ENCODE measurements at regions of chr7 and their contacts with region 1.

Region 1: DNA sequence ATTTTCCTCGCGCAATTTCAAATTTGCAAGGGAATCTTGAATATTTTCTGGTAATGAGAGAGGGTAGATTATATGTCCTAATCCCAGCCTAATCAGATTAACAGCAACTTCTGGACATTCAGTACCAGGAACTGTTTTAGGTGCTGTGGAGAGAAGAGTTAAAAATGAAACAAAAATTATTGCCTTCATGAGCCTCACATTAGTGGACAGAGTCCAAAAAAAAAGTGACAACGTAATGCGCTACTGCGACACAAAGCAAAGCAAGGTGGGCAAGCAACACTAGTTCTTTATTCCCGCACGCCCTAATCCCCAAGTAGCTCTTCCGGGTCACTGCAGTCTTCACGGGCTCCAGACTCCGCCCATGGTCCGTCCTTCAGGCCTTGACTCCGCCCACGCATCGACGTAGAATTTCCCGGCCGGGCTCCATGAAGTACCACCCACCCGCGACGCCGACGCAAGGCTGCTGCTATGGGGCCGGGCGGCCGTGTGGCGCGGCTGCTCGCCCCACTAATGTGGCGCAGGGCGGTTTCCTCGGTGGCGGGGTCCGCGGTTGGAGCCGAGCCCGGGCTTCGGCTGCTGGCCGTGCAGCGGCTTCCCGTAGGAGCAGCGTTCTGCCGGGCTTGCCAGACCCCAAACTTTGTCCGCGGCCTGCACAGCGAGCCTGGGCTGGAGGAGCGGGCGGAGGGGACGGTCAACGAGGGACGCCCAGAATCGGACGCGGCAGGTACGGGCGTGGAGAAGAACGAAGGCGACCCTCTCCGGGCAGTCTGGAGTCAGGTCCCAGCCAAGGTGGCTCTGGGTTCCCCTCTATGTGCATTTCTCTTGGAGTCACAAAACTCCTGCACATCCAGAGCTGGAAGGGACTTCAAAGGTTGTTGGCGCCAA is at the start of gene MALSU1:
- DNase-seq: peak; percentile 95
- ATAC-seq: peak; percentile 99
- H3K4me3 Mint-ChIP-seq: peak within 1 kb of the TSS; percentile 89
- H3K27ac Mint-ChIP-seq: peak within 1 kb of the TSS; percentile 95
- H3K4me1 Mint-ChIP-seq: peaks cover 39% of the 10 kb centered on the region
- H3K27me3 Mint-ChIP-seq: peaks cover 4% of the 10 kb centered on the region
- CTCF ChIP-seq: no peak
- total RNA-seq, gene MALSU1: 42.0 and 42.6 TPM in 2 replicates

Region 2: DNA sequence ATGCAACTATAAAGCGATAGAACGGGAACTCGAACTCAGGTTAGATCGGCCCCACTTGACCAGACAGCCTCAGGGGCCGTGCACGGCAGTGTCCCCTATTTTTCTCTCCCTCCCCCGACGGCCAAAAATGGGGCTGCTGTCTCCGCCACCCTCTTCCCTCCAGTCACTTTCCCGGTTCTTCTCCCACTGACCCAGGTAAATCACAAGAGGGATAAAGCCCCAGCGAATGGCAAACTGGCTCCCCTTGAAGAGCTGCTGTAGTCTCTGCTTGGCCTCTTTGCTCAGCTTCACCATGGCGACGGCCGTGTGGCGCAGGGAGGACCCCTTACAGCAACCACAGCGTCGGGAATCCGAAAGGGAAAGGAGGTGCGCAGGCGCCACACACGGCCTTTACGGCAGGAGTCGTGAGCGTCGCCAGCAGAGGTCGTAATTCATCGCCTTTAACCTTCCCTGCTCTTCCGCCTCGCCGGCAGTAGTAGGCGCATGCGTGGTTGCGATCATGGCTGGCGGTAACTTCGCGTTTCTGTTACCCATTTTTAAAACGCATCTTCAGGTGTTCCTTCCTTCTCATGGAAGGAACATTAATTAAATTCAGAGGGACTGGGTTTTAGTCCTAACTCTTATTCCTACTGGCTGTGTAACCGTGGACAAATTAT is 476.5 kb before region 1 on chr7 and contains the start of gene TOMM7:
- CTCF ChIA-PET with region 1: no interaction called
- POLR2A ChIA-PET with region 1: no interaction called
- intact Hi-C with region 1: loop called (anchors 2 kb)
- DNase-seq: peak; percentile 66
- ATAC-seq: peak; percentile 99
- H3K4me3 Mint-ChIP-seq: peak within 1 kb of the TSS; percentile 99
- H3K27ac Mint-ChIP-seq: peak within 1 kb of the TSS; percentile 91
- H3K4me1 Mint-ChIP-seq: peaks cover 39% of the 10 kb centered on the region
- H3K27me3 Mint-ChIP-seq: peaks cover 11% of the 10 kb centered on the region
- CTCF ChIP-seq: no peak
- total RNA-seq, gene TOMM7: 324 and 406 TPM in 2 replicates

Region 3: DNA sequence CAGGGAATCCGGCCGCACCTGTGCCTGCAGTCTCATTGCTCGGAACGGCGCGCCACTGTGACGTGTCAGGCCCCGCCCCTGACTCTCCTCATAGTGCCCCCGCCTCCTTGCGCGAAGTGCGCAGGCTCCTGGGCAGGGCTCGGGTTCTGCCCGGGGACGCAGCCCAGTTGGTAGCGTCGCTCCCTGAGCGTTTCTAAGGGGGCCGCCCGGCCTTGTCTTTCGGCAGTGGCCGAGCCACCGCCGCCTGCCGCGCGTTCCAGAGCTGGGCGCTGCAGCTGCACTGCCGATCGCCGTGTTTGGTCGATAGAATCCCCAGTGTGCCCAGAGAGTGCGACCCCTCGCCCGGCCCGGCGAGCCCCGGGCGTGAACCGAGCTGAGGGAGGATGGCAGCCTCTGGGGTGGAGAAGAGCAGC is 193.5 kb before region 1 on chr7 and contains the start of gene KLHL7:
- CTCF ChIA-PET with region 1: no interaction called
- POLR2A ChIA-PET with region 1: interaction called, 5 read pairs
- intact Hi-C with region 1: loop called (anchors 1 kb)
- DNase-seq: peak; percentile 98
- ATAC-seq: peak; percentile 95
- H3K4me3 Mint-ChIP-seq: peak within 1 kb of the TSS; percentile 94
- H3K27ac Mint-ChIP-seq: peak within 1 kb of the TSS; percentile 97
- H3K4me1 Mint-ChIP-seq: peaks cover 32% of the 10 kb centered on the region
- H3K27me3 Mint-ChIP-seq: no peaks in the 10 kb centered on the region
- CTCF ChIP-seq: no peak
- total RNA-seq, gene KLHL7: 12.2 and 13.4 TPM in 2 replicates

Region 4: GRCh38 chr7:23181684-23182553 is 117.2 kb before region 1 on chr7 and contains the start of gene NUP42:
- CTCF ChIA-PET with region 1: no interaction called
- POLR2A ChIA-PET with region 1: interaction called, 22 read pairs
- intact Hi-C with region 1: loop called (anchors 1 kb)
- DNase-seq: peak; percentile 90
- ATAC-seq: peak; percentile 90
- H3K4me3 Mint-ChIP-seq: peak within 1 kb of the TSS; percentile 94
- H3K27ac Mint-ChIP-seq: peak within 1 kb of the TSS; percentile 100
- H3K4me1 Mint-ChIP-seq: peaks cover 28% of the 10 kb centered on the region
- H3K27me3 Mint-ChIP-seq: no peaks in the 10 kb centered on the region
- CTCF ChIP-seq: no peak
- total RNA-seq, gene NUP42: 39.2 and 50.6 TPM in 2 replicates

Region 5: GRCh38 chr7:23347682-23348180 is 48.6 kb after region 1 on chr7:
- CTCF ChIA-PET with region 1: no interaction called
- POLR2A ChIA-PET with region 1: interaction called, 5 read pairs
- intact Hi-C with region 1: loop called (anchors 2 kb)
- DNase-seq: no peak
- ATAC-seq: peak; percentile 38
- H3K4me3 Mint-ChIP-seq: peak overlapping the region; percentile 44
- H3K27ac Mint-ChIP-seq: peak overlapping the region; percentile 41
- H3K4me1 Mint-ChIP-seq: peaks cover 30% of the 10 kb centered on the region
- H3K27me3 Mint-ChIP-seq: no peaks in the 10 kb centered on the region
- CTCF ChIP-seq: no peak

Region 6: DNA sequence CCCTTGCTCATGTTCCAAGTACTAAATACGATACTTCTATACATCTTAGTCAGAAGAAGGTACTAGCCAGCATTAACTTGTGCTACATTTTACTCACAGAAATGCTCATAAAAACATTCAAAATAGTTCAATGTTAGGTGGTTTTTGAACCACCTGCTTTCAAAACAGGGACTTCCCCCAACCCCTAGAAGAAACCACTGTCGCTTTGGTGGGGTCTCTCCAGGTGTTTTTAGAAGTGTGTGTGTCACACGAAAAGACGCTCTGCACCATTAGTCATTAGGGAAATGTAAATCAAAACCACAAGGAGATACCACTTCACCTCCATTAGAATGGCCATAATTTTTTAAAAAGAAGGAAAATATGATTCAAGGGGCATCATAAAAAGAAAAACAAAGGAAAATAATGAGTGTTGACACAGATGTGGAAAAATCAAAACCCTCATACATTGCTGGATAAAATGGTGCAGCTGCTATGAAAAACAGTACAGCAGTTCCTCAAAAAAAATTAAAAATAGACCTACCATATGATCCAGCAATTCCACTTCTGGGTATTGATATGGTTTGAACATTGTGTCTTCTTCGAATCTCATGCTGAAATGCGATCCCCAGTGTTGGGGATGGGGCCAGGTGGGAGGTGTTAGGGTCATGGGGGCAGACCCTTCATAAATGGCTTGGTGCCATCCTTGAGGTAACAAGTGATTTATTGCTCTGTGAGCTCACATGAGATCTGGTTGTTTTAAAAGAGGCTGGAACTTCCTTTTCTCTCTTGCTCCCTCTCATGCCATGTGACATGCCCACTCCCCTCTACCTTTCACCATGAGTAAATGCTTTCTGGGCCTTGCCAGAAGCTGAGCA is 74.3 kb after region 1 on chr7:
- CTCF ChIA-PET with region 1: no interaction called
- POLR2A ChIA-PET with region 1: no interaction called
- intact Hi-C with region 1: loop called (anchors 2 kb)
- DNase-seq: peak; percentile 28
- ATAC-seq: peak; percentile 69
- H3K4me3 Mint-ChIP-seq: peak overlapping the region; percentile 68
- H3K27ac Mint-ChIP-seq: peak overlapping the region; percentile 94
- H3K4me1 Mint-ChIP-seq: peaks cover 70% of the 10 kb centered on the region
- H3K27me3 Mint-ChIP-seq: no peaks in the 10 kb centered on the region
- CTCF ChIP-seq: no peak

Measured in activated B cell treated with CpG ODN at 0.5 μM for 24 hours (primary cell).